GM12878 (cell line): ENCODE measurements at regions of chr14 and their contacts with region 1.

Region 1: DNA sequence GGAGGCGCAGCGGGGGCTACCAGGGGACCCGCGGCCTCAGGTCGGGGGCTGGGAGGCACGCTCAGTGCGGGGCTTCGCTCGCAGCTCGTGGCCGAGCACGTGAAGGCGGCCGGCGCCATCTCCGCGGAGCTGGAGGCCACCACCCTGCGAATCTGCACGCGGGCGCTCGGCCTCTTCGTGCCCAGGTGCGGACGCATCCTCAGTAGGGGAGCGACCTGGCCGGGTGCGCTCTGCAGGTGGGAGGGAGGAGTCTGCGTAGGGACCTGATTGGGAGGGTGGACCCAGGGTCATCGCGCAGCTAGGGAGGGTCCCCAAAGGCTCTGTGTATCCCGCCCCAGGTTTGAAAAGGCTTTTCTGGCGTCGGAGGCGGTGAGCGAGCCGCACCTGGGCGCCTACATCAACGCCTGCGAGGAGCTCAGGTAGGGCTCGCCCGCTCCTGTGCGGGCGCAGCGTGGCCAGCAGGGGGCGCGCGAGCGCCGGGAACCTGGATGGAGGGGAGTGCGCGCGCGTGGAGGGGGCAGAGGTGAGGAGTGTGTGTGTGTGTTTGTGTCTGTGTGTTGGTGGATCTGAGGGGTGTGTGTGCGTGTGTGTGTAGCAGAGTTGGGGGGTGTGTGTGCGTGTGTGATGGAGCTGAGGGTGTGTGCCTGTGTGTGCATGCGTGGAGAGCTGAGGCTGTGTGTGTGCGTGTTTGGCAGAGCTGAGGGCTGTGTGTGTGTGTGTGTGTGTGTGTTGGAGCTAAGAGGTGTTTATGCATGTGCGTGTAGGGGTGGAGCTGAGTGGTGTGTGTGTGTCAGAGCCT is 10.3 kb downstream of the EXOC3L4 start:
- DNase-seq: no peak
- ATAC-seq: peak; percentile 83
- H3K4me3 ChIP-seq: no peak overlapping the region
- H3K27ac ChIP-seq: no peak overlapping the region
- H3K4me1 ChIP-seq: peaks cover 42% of the 10 kb centered on the region
- H3K27me3 ChIP-seq: peaks cover 5 to 11% of the 10 kb centered on the region in 2 experiments; a peak in 2 of 4 replicates
- CTCF ChIP-seq: peak; percentile 96 to 98 (median 98)
- EP300 ChIP-seq: no peak
- POLR2A ChIP-seq: no peak
- RAD21 ChIP-seq: peak; percentile 93

Region 2: DNA sequence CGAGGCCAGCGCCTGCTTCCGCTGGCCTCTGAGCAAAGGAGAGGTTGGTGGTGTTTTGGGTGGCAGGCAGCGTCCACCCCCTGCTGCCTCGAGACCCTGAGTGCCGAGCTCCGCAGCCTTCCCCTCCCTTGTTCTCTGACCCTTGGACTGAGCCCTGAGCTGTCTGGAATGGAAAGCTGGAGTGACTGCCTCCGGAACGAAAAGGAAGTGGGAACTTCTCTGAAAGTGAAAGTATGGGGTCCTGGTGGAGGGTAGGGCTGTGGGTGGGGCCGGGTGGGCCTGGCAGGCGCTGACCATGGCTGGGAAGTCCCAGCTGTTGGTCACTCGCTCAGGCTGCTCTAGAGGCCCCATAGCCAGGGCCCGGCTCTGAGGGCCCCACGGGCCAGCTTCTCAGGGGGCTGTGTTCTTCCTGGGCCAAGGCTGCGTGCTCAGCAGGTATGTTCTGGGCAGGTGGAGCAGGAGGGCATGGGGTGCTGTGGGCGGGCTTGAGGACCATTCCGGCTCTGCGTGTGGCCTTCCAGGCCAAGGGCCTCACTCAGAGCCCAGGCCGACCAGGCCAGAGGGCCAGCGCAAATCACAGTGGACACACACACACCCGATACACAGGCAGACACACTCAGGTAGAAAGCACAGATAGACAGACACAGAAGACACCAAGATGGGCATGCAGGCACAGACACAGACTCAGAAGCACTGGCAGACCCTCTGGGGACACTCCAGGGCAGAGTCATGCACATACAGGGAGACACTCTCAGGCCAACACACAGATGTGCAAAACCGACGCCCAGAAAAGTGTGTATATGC is 10.2 kb before region 1 on chr14 and contains the start of gene EXOC3L4:
- CTCF ChIA-PET with region 1: interaction called, 37 read pairs
- POLR2A ChIA-PET with region 1: interaction called, 4 read pairs
- RAD21 ChIA-PET with region 1: interaction called, 17 read pairs
- SMC1A ChIA-PET with region 1: interaction called, 13 read pairs
- in situ Hi-C with region 1: no loop called
- intact Hi-C with region 1: no loop called
- DNase-seq: no peak
- ATAC-seq: no peak
- H3K4me3 ChIP-seq: no peak within 1 kb of the TSS
- H3K27ac ChIP-seq: no peak within 1 kb of the TSS
- H3K4me1 ChIP-seq: peaks cover 13% of the 10 kb centered on the region
- H3K27me3 ChIP-seq: no peaks in the 10 kb centered on the region
- CTCF ChIP-seq: no peak
- EP300 ChIP-seq: no peak
- POLR2A ChIP-seq: no peak
- RAD21 ChIP-seq: no peak
- polyA plus RNA-seq, gene EXOC3L4: not detected

Region 3: DNA sequence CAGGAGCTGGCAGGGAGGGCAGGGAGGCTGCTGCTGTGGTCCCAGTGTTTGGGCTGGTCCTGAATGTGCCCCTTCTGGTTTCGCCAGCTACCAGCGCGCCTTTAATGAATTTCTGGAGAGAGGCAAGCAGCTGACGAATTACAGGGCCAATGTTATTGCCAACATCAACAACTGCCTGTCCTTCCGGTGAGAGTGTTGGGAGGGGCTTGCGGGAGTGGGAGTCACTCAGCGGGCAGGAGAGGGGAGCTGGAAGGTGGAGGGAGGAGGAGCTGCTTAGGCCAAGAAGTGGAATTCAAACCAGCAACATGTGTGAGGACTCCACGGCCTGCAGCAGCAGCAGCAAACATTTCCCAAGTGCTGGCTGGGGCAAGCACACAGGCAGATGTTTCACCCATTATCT is 26.1 kb after region 1 on chr14:
- CTCF ChIA-PET with region 1: interaction called, 19 read pairs
- POLR2A ChIA-PET with region 1: no interaction called
- RAD21 ChIA-PET with region 1: interaction called, 8 read pairs
- SMC1A ChIA-PET with region 1: interaction called, 12 read pairs
- in situ Hi-C with region 1: no loop called
- intact Hi-C with region 1: no loop called
- DNase-seq: no peak
- ATAC-seq: no peak
- H3K4me3 ChIP-seq: no peak overlapping the region
- H3K27ac ChIP-seq: no peak overlapping the region
- H3K4me1 ChIP-seq: no peaks in the 10 kb centered on the region
- H3K27me3 ChIP-seq: no peaks in the 10 kb centered on the region
- CTCF ChIP-seq: no peak
- EP300 ChIP-seq: no peak
- POLR2A ChIP-seq: no peak
- RAD21 ChIP-seq: no peak

Region 4: DNA sequence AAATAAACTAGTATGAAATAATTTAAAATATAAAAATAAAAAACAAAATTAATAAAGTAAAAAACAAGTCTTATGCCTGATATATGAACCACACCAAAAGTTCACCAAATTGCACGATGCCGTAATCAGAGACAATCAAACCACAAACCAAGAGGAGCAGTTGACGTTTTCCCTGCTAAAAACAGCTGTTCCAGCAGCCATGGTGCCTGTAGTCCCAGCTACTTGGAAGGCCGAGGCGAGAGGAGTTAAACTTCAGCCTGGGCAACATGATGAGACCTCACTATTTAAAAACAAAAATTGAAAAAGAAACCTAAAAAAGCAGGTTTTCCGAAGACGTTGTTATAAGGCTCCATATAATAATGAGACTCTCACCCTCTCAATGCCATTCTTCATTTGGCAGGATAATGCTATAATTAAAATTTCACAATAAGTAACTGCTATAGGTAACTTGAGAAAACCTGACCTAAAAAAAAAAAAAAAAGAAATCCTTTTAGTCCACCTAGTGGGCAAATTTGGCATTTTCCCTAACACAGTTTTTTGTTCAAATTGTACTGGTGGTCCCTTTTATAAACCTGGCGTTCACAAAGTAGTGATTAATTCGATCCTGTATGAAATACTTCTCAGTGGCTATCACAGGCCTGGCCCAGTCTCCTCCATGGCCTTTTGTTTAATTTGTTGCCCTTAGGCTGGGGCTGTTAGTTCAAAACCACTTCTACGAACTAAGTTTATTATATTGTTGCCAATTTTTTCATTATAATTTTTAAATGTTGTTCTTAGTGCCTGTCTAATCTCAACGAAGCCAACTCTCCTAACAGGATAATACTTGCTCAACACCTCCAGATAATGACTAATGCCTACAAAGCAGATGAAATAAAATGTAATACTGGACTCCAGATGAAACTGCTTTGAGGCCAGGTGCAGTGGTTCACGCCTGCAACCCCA is 80.5 kb after region 1 on chr14:
- CTCF ChIA-PET with region 1: interaction called, 202 read pairs
- POLR2A ChIA-PET with region 1: interaction called, 4 read pairs
- RAD21 ChIA-PET with region 1: interaction called, 45 read pairs
- SMC1A ChIA-PET with region 1: interaction called, 76 read pairs
- in situ Hi-C with region 1: loop called (anchors 5 kb)
- intact Hi-C with region 1: loop called (anchors 1 kb)
- DNase-seq: no peak
- ATAC-seq: peak; percentile 41
- H3K4me3 ChIP-seq: no peak overlapping the region
- H3K27ac ChIP-seq: no peak overlapping the region
- H3K4me1 ChIP-seq: no peaks in the 10 kb centered on the region
- H3K27me3 ChIP-seq: peaks cover 0 to 2% of the 10 kb centered on the region in 2 experiments; a peak in 1 of 4 replicates
- CTCF ChIP-seq: peak; percentile 48 to 67 (median 55); a peak in 5 of 6 replicates
- EP300 ChIP-seq: no peak
- POLR2A ChIP-seq: no peak
- RAD21 ChIP-seq: peak; percentile 62

Region 5: DNA sequence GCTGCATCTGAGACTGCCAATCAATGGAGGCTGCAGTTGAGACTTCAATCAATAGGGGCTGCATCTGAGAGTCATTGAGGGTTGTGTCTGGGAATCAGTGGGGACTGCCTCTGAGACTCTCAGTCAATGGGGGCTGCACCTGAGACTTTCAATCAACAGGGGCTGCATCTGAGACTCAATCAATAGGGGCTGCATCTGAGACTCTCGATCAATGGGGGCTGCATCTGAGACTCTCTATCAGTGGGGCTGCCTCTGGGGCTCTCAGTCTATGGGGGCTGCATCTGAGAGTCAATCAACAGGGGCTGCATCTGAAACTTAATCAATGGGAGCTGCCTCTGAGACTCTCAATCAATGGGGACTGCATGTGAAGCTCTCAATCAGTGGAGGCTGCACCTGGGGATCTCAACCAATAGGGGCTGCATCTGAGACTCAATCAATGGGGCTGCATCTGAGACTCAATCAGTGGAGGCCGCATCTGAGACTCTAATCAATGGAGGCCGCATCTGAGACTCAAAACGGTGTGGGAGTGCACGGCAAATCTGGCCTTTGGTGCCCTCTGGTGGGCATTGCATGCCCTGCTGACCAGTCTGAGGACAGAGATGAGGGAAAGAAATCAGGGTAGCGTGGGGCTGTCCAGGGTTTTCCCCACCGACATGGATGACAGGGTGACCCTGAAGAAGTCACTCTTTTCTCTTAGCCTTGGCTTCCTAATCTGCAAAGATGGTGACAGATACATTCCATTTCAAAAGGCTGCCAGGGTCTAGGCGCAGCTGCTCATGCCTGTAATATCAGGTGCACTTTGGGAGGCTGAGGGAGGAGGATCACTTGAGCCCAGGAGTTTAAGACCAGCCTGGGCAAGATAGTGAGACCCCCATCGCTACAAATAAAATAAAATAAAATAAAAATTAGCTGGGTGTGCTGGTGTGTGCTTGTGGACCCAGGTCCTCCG is 187.8 kb after region 1 on chr14:
- CTCF ChIA-PET with region 1: interaction called, 77 read pairs
- POLR2A ChIA-PET with region 1: no interaction called
- RAD21 ChIA-PET with region 1: interaction called, 35 read pairs
- SMC1A ChIA-PET with region 1: interaction called, 19 read pairs
- in situ Hi-C with region 1: no loop called
- intact Hi-C with region 1: loop called (anchors 1 kb)
- DNase-seq: peak; percentile 52
- ATAC-seq: peak; percentile 99
- H3K4me3 ChIP-seq: no peak overlapping the region
- H3K27ac ChIP-seq: no peak overlapping the region
- H3K4me1 ChIP-seq: no peaks in the 10 kb centered on the region
- H3K27me3 ChIP-seq: no peaks in the 10 kb centered on the region
- CTCF ChIP-seq: peak; percentile 94 to 98 (median 96)
- EP300 ChIP-seq: no peak
- POLR2A ChIP-seq: no peak
- RAD21 ChIP-seq: peak; percentile 95